Gastrocnemius medialis (tissue), 4 donors: ENCODE measurements at regions of chr9 and their contacts with region 1.

Region 1: GRCh38 chr9:120477521-120478001 is 102.4 kb downstream of the CDK5RAP2 start:
- DNase-seq: peak; percentile 46 to 81
- ATAC-seq: peak; percentile 77 to 80
- H3K4me3 ChIP-seq: no peak overlapping the region
- H3K27ac ChIP-seq: peak overlapping the region; percentile 76 to 89 (median 86)
- H3K4me1 ChIP-seq: peaks cover 37 to 42% of the 10 kb centered on the region in 2 donors
- H3K27me3 ChIP-seq: no peaks in the 10 kb centered on the region
- CTCF ChIP-seq: peak; percentile 80 to 96 (median 91)
- POLR2A ChIP-seq: no peak

Region 2: GRCh38 chr9:119802621-119803020 is 674.9 kb before region 1 on chr9:
- in situ Hi-C with region 1: loop called in 2 of 4 experiments (anchors 25 kb)
- intact Hi-C with region 1: loop called (anchors 5 kb)
- DNase-seq: peak; percentile 76 to 92
- ATAC-seq: peak; percentile 90 to 91
- H3K4me3 ChIP-seq: peak overlapping the region in 1 of 4 donors; percentile 11
- H3K27ac ChIP-seq: peak overlapping the region; percentile 76 to 90 (median 86)
- H3K4me1 ChIP-seq: peaks cover 23 to 28% of the 10 kb centered on the region in 2 donors
- H3K27me3 ChIP-seq: no peaks in the 10 kb centered on the region
- CTCF ChIP-seq: no peak
- POLR2A ChIP-seq: peak; percentile 22 to 62

Region 3: GRCh38 chr9:120265791-120266190 is 211.8 kb before region 1 on chr9:
- in situ Hi-C with region 1: no loop called
- intact Hi-C with region 1: loop called (anchors 5 kb)
- DNase-seq: peak; percentile 83 to 89
- ATAC-seq: peak; percentile 98 to 99
- H3K4me3 ChIP-seq: no peak overlapping the region
- H3K27ac ChIP-seq: peak overlapping the region; percentile 64 to 80 (median 70)
- H3K4me1 ChIP-seq: peaks cover 15 to 21% of the 10 kb centered on the region in 2 donors
- H3K27me3 ChIP-seq: no peaks in the 10 kb centered on the region
- CTCF ChIP-seq: no peak
- POLR2A ChIP-seq: no peak

Region 4: DNA sequence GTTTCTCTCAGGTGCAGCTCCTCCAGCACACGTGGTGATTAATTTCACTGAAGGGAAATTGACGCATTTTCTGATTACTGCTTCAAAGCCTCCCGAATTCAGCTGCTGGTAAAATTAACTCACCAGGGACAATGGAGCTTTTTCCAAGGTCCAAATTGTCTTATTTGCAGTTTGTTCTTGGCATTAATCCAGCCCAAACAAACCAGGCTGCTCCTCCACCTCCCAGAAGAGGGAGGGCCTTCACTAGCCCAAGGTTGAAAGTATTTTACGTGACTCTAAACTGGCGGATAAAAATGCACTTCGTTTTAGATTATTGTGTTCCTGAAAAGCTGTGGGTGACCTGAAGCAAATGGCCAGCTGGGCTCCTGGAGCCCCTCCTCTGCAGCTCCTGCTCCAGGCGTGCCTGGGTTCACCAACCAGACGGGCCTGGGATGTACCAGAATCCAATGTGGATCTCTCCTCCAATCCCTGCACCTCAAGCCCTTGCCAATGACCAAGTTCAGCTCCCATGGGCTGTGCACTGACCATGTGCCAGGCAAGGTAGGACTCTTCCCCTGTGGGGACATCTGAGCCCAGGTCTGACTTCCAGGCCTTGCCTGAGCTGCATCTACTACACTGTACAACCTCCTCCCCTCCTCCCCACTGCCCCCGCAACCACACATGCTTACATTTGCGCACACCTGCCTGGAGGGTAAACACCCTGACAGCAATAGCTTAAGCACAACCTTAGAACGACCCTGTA is 91.0 kb before region 1 on chr9:
- in situ Hi-C with region 1: no loop called
- intact Hi-C with region 1: loop called (anchors 5 kb)
- DNase-seq: no peak
- ATAC-seq: no peak
- H3K4me3 ChIP-seq: no peak overlapping the region
- H3K27ac ChIP-seq: no peak overlapping the region
- H3K4me1 ChIP-seq: peaks cover 20 to 23% of the 10 kb centered on the region in 2 donors
- H3K27me3 ChIP-seq: no peaks in the 10 kb centered on the region
- CTCF ChIP-seq: no peak
- POLR2A ChIP-seq: no peak

Region 5: DNA sequence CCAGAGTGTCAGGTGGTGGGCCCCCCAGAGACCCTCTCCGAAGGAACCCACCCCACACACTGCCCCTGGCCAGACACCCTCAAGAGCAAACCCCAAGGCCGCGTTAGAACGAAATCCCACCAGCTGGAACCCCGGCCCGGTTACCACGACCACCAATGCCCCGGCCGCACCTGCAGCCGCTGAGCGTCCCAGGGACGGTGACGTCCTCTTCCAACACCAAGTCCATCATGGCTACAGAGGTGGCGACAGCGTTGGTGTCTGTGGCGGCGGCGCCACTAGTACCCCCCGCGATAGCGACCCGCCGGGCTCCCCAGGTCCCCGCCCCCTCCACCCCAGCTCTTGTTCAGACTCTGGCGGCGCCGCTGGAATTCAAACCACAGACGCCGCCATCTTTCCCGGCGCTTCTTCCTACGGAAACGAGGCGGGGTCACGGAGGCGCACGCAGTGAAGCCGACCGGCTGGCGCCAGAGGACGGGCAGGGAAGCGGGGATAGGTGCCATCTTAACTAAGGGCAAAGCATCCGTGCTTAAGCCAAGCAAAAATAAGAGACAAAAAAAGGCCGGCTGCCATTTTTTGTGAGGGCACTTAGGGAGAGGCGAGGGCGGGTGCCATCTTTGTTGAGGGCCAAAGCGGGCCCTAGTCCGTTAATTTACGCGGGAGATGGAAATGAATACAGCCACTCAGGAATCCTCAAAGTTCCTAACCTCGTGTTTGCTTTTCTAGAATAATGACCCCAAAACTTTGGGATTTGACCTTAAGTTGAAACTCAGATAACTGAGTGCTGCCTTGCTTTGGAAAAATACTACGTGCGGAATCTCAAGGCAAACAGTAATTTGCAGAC is 102.4 kb after region 1 on chr9 and contains the start of gene CDK5RAP2:
- in situ Hi-C with region 1: no loop called
- intact Hi-C with region 1: loop called (anchors 5 kb)
- DNase-seq: peak; percentile 93 to 95
- ATAC-seq: peak; percentile 84 to 92
- H3K4me3 ChIP-seq: peak within 1 kb of the TSS; percentile 89 to 98 (median 95)
- H3K27ac ChIP-seq: peak within 1 kb of the TSS; percentile 88 to 95 (median 89)
- H3K4me1 ChIP-seq: peaks cover 24% of the 10 kb centered on the region in 2 donors
- H3K27me3 ChIP-seq: no peaks in the 10 kb centered on the region
- CTCF ChIP-seq: no peak
- POLR2A ChIP-seq: peak; percentile 51 to 56
- total RNA-seq, gene CDK5RAP2: 57.4 to 86.3 (median 70.3) TPM